Activated naive CD8-positive, alpha-beta T cell treated with anti-CD3 and anti-CD28 coated beads, Interleukin-2, amount 10 ng/mL, durations not matched to agents 7 days and 5 days (primary cell): ENCODE measurements at regions of chr6 and their contacts with region 1.

Region 1: DNA sequence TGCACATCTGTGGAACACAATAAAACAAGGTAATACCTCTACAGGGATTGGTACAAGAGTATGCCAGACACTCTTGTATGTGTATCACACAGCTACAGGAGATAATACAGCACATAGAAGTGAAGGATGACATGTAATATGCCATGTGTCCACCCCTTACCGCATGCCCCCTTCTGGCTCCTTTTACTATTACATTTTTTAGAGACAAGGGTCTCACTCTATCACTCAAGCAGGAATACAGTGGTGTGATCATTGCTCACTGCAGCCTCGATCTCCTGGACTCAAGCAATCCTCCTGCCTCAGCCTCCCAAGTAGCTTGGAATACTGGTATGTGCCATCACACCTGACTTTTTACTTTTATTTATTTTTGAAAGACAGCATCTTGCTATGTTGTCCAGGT is 4.2 kb upstream of the NCR3 start:
- DNase-seq: no peak
- ATAC-seq: peak; percentile 50
- H3K4me3 Mint-ChIP-seq: no peak overlapping the region
- H3K27ac Mint-ChIP-seq: no peak overlapping the region
- H3K4me1 Mint-ChIP-seq: peaks cover 49% of the 10 kb centered on the region
- H3K27me3 Mint-ChIP-seq: no peaks in the 10 kb centered on the region

Region 2: GRCh38 chr6:31493875-31494694 is 102.9 kb before region 1 on chr6:
- POLR2A ChIA-PET with region 1: interaction called, 12 read pairs
- DNase-seq: peak; percentile 84
- ATAC-seq: peak; percentile 44
- H3K4me3 Mint-ChIP-seq: peak overlapping the region; percentile 97
- H3K27ac Mint-ChIP-seq: peak overlapping the region; percentile 96
- H3K4me1 Mint-ChIP-seq: peaks cover 38% of the 10 kb centered on the region
- H3K27me3 Mint-ChIP-seq: no peaks in the 10 kb centered on the region

Region 3: GRCh38 chr6:31546962-31547726 is 49.9 kb before region 1 on chr6 and contains the start of gene NFKBIL1:
- POLR2A ChIA-PET with region 1: interaction called, 25 read pairs
- DNase-seq: peak; percentile 83
- ATAC-seq: peak; percentile 81
- H3K4me3 Mint-ChIP-seq: peak within 1 kb of the TSS; percentile 88
- H3K27ac Mint-ChIP-seq: peak within 1 kb of the TSS; percentile 71
- H3K4me1 Mint-ChIP-seq: peaks cover 32% of the 10 kb centered on the region
- H3K27me3 Mint-ChIP-seq: no peaks in the 10 kb centered on the region
- total RNA-seq, gene NFKBIL1: 15.4 to 17.6 TPM

Region 4: DNA sequence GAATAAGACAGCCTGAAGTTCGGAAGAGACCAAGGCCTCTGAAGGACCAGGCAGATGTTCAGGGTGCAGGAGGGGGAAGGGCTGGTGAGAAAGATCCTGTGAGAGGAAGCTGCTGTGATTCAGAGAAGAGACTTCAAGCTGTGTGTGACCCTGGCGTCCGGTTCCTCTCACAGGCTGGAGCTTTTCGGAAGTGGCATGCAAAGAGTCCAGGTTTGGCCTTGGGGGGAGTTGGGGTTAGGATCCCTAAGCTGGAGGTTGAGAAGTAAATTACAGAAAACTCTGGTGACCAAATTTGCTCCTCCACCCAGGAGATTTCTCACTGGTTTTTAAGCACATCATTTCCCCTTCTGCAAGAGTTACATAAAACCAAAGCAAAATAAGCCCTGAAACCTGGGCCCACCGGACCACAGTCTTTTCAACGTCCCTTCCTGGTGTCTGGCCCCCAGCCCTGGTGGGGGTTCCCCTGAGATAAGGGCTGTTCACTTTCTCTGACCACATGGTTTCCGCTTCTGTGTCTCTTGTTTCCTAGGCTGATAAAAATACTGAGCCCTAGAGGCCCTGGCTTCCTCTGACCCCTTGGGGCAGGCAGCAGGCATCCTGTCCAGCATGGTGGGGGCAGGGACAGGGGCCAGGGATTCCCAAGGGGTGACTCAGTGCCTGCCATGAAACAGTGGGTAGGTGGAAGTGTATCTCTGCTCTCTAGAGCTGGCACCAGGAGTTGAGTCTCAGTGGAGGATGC is 36.9 kb before region 1 on chr6:
- POLR2A ChIA-PET with region 1: interaction called, 15 read pairs
- DNase-seq: no peak
- ATAC-seq: peak; percentile 78
- H3K4me3 Mint-ChIP-seq: peak overlapping the region; percentile 76
- H3K27ac Mint-ChIP-seq: peak overlapping the region; percentile 70
- H3K4me1 Mint-ChIP-seq: peaks cover 55% of the 10 kb centered on the region
- H3K27me3 Mint-ChIP-seq: peaks cover 31% of the 10 kb centered on the region

Region 5: DNA sequence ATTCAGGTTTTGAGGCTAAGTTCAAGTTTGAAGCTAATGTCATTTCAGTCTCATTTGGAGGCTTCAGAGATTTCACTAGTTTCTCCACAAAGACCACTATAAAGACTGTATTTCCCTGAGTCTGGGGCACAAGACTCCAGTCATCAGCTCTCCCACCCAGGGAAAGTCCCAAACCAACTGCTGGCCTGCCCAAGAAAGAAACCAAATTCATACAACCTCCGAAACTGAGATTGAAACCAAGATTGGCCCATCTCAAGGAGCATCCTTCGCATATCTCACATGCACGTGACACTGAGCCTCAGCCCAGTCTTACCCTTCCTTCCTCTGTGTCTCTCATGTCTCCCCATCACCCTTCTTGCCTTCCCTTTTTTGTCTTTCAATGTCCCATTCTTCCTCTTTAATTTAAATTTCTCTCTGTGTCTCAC is 28.5 kb before region 1 on chr6:
- POLR2A ChIA-PET with region 1: interaction called, 481 read pairs
- DNase-seq: no peak
- ATAC-seq: peak; percentile 65
- H3K4me3 Mint-ChIP-seq: peak overlapping the region; percentile 41
- H3K27ac Mint-ChIP-seq: peak overlapping the region; percentile 64
- H3K4me1 Mint-ChIP-seq: peaks cover 57% of the 10 kb centered on the region
- H3K27me3 Mint-ChIP-seq: peaks cover 36% of the 10 kb centered on the region

Region 6: GRCh38 chr6:31580807-31581433 is 16.1 kb before region 1 on chr6:
- POLR2A ChIA-PET with region 1: interaction called, 481 read pairs
- DNase-seq: peak; percentile 97
- ATAC-seq: peak; percentile 74
- H3K4me3 Mint-ChIP-seq: peak overlapping the region; percentile 97
- H3K27ac Mint-ChIP-seq: peak overlapping the region; percentile 99
- H3K4me1 Mint-ChIP-seq: peaks cover 67% of the 10 kb centered on the region
- H3K27me3 Mint-ChIP-seq: no peaks in the 10 kb centered on the region

Region 7: GRCh38 chr6:31614684-31615578 is 17.9 kb after region 1 on chr6 and contains the start of gene AIF1:
- POLR2A ChIA-PET with region 1: interaction called, 12 read pairs
- DNase-seq: no peak
- ATAC-seq: no peak
- H3K4me3 Mint-ChIP-seq: peak within 1 kb of the TSS; percentile 94
- H3K27ac Mint-ChIP-seq: peak within 1 kb of the TSS; percentile 95
- H3K4me1 Mint-ChIP-seq: peaks cover 33% of the 10 kb centered on the region
- H3K27me3 Mint-ChIP-seq: no peaks in the 10 kb centered on the region
- total RNA-seq, gene AIF1: 117 to 118 TPM

Region 8: DNA sequence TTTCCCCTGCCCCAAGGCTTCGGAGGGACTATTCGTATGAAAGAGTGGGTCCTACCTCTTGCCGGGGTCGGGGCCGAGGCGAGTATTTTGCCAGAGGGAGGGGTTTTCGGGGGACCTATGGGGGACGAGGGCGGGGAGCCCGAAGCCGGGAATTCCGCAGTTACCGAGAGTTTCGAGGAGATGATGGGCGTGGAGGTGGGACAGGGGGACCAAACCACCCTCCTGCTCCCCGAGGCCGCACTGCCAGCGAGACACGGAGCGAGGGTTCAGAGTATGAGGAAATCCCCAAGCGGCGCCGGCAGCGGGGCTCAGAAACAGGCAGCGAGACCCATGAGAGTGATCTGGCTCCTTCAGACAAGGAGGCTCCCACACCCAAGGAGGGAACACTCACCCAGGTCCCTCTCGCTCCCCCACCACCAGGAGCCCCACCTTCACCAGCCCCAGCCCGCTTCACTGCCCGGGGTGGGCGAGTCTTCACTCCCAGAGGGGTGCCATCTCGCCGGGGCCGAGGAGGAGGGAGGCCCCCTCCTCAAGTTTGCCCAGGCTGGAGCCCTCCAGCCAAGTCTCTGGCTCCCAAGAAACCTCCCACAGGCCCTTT is 34.8 kb after region 1 on chr6:
- POLR2A ChIA-PET with region 1: no interaction called
- DNase-seq: no peak
- ATAC-seq: no peak
- H3K4me3 Mint-ChIP-seq: no peak overlapping the region
- H3K27ac Mint-ChIP-seq: no peak overlapping the region
- H3K4me1 Mint-ChIP-seq: peaks cover 2% of the 10 kb centered on the region
- H3K27me3 Mint-ChIP-seq: no peaks in the 10 kb centered on the region